CD4-positive, alpha-beta memory T cell (primary cell): ENCODE measurements at regions of chr12 and their contacts with region 1.

Region 1: DNA sequence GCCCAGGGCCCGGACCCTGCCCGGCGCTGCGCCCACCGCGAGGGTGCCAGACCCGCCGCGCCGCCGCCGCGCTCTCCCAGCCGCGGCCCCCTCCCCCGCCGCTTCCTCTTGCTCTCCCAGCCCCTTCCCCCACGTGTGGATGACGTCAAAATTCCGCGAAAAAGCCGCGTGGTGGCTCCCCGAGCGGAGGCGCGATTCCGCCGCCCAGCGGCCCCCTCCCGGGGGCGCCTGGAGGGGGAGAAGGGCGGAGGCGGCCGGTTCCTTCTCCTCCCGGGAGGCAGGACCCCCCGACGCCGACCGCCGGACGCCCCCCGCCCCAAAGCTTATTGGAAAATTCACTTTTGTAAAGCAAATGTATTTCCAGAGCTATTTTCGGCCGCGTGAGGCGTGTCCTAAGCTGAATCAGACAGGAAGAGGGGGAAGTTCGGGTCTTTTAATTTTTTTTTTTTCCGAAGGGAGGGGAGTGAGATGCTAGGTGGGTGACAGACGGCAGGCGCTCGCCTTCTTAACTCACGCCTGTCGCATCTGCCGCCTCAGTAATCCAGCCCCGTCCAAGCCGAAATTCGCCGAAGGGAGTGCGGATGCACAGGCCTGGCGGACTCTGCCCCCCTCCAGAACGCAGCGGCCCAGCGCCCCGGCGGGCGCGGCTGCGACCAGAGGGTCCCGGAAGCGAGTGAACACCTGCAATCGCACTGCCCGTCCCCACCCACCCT is 4.1 kb upstream of the CCND2 start:
- DNase-seq: peak; percentile 91 to 96 (median 93)
- H3K4me3 ChIP-seq: peak overlapping the region; percentile 79 to 84
- H3K4me3 Mint-ChIP-seq: peak overlapping the region; percentile 96 to 100 (median 98)
- H3K27ac ChIP-seq: peak overlapping the region; percentile 91
- H3K27ac Mint-ChIP-seq: peak overlapping the region; percentile 95 to 100 (median 98)
- H3K4me1 ChIP-seq: peaks cover 34% of the 10 kb centered on the region
- H3K4me1 Mint-ChIP-seq: peaks cover 13 to 49% (median 19%) of the 10 kb centered on the region in 4 donors
- H3K27me3 ChIP-seq: no peaks in the 10 kb centered on the region
- H3K27me3 Mint-ChIP-seq: peaks cover 1 to 6% of the 10 kb centered on the region in 2 donors

Region 2: GRCh38 chr12:3973978-3974644 is 295.3 kb before region 1 on chr12:
- CTCF ChIA-PET with region 1: no interaction called
- POLR2A ChIA-PET with region 1: interaction called, 11 read pairs
- intact Hi-C with region 1: no loop called
- DNase-seq: peak in 3 of 5 donors; percentile 20 to 46 (median 21)
- H3K4me3 ChIP-seq: peak overlapping the region in 1 of 2 donors; percentile 8
- H3K4me3 Mint-ChIP-seq: peak overlapping the region; percentile 5 to 83 (median 74)
- H3K27ac ChIP-seq: peak overlapping the region; percentile 43
- H3K27ac Mint-ChIP-seq: peak overlapping the region; percentile 75 to 93 (median 90)
- H3K4me1 ChIP-seq: peaks cover 57% of the 10 kb centered on the region
- H3K4me1 Mint-ChIP-seq: peaks cover 39 to 64% (median 51%) of the 10 kb centered on the region in 4 donors
- H3K27me3 ChIP-seq: no peaks in the 10 kb centered on the region
- H3K27me3 Mint-ChIP-seq: no peaks in the 10 kb centered on the region

Region 3: GRCh38 chr12:4118017-4118510 is 151.4 kb before region 1 on chr12:
- CTCF ChIA-PET with region 1: interaction called, 9 read pairs
- POLR2A ChIA-PET with region 1: interaction called, 17 read pairs
- intact Hi-C with region 1: no loop called
- DNase-seq: peak in 4 of 5 donors; percentile 34 to 45 (median 40)
- H3K4me3 ChIP-seq: no peak overlapping the region
- H3K4me3 Mint-ChIP-seq: peak overlapping the region; percentile 67 to 86 (median 80)
- H3K27ac ChIP-seq: no peak overlapping the region
- H3K27ac Mint-ChIP-seq: peak overlapping the region; percentile 31 to 92 (median 78)
- H3K4me1 ChIP-seq: peaks cover 50% of the 10 kb centered on the region
- H3K4me1 Mint-ChIP-seq: peaks cover 40 to 57% (median 45%) of the 10 kb centered on the region in 4 donors
- H3K27me3 ChIP-seq: no peaks in the 10 kb centered on the region
- H3K27me3 Mint-ChIP-seq: peaks cover 0 to 6% of the 10 kb centered on the region in 2 donors

Region 4: GRCh38 chr12:4164559-4165558 is 104.6 kb before region 1 on chr12:
- CTCF ChIA-PET with region 1: interaction called, 3 read pairs
- POLR2A ChIA-PET with region 1: interaction called, 24 read pairs
- intact Hi-C with region 1: no loop called
- DNase-seq: peak; percentile 40 to 60 (median 59)
- H3K4me3 ChIP-seq: peak overlapping the region; percentile 9 to 75
- H3K4me3 Mint-ChIP-seq: peak overlapping the region; percentile 83 to 94 (median 90)
- H3K27ac ChIP-seq: peak overlapping the region; percentile 50
- H3K27ac Mint-ChIP-seq: peak overlapping the region; percentile 28 to 96 (median 91)
- H3K4me1 ChIP-seq: peaks cover 12% of the 10 kb centered on the region
- H3K4me1 Mint-ChIP-seq: peaks cover 13 to 29% (median 22%) of the 10 kb centered on the region in 4 donors
- H3K27me3 ChIP-seq: no peaks in the 10 kb centered on the region
- H3K27me3 Mint-ChIP-seq: no peaks in the 10 kb centered on the region

Region 5: DNA sequence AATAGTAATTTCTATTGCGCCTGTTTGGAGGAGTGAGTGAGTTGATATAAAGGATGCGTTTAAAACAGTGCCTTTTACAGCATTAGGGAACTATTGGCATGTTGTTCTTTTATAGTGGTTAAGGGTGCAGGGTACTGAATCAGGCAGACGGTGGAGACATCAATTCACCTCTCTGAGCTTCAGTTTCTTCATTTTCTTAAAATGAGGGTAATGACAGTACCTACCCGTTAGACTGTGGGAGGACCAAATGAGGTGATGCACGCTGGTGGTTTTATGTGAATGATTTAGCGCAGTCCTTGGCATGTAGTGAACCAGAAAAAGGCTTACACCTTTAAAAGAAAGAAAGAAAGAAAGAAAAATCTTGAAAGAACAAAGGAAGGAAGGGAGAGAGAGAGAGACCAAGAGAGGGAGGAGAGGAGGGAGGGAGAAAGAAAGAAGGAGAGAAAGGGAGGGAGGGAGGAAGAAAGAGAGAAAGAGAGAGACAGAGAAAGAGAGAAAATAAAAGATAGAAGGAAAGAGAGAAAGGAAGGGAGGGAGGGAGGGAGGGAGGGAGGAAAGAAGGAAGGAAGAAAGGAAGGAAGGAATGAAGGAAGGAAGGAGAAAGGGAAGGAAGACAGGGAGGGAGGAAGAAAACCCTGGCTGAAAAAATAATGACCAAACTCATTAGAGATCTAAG is 18.1 kb before region 1 on chr12:
- CTCF ChIA-PET with region 1: interaction called, 7 read pairs
- POLR2A ChIA-PET with region 1: interaction called, 11 read pairs
- intact Hi-C with region 1: no loop called
- DNase-seq: peak; percentile 26 to 64 (median 45)
- H3K4me3 ChIP-seq: no peak overlapping the region
- H3K4me3 Mint-ChIP-seq: peak overlapping the region in 2 of 8 donors; percentile 14 to 50
- H3K27ac ChIP-seq: no peak overlapping the region
- H3K27ac Mint-ChIP-seq: peak overlapping the region in 5 of 7 donors; percentile 0 to 86 (median 57)
- H3K4me1 ChIP-seq: no peaks in the 10 kb centered on the region
- H3K4me1 Mint-ChIP-seq: peaks cover 4 to 9% (median 6%) of the 10 kb centered on the region in 4 donors
- H3K27me3 ChIP-seq: no peaks in the 10 kb centered on the region
- H3K27me3 Mint-ChIP-seq: peaks cover 4 to 7% of the 10 kb centered on the region in 2 donors

Region 6: DNA sequence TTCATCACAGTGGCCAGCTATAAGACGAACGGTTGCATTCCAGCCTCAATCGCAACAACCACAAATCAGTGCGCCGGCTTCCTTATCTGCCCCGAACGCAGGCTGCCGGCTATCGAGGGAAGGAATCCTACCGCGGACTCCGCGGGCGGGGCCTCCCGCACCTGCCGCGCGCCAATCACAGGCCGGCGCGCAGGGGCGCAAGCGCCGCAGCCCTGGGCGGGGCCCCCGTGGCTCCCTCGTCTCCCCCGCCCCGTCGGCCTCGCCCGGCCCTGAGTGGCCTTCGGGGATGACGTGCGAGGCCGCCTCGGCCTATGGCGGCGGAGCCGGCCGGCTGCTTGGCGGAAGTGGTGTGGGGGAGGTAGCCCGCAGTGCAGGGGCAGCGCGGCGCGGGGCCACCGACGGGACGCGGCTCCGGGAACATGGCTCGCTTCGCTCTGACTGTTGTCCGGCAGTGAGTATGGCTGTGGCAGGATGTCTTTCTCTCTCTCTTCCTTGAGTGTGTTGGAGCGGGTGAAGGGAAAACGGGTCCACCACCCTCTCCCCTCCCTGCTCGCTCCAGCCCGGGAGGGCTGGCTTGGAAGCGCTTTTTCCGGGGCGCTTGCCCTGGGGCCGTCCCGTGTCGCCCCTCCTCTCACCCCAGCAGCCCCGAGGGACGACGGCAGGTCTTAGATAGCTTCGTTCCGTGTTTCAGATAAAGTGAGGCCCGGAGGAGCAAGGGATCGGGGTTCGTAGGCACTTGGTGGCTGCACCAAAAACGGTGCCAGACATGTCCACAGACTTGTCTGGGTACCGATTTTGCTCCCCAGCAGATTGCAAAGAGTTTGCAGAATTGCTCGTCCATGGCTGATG is 51.6 kb after region 1 on chr12 and contains the start of gene TIGAR:
- CTCF ChIA-PET with region 1: interaction called, 5 read pairs
- POLR2A ChIA-PET with region 1: interaction called, 11 read pairs
- intact Hi-C with region 1: loop called (anchors 1 kb)
- DNase-seq: peak; percentile 88 to 94 (median 92)
- H3K4me3 ChIP-seq: peak within 1 kb of the TSS; percentile 97
- H3K4me3 Mint-ChIP-seq: peak within 1 kb of the TSS; percentile 83 to 95 (median 93)
- H3K27ac ChIP-seq: peak within 1 kb of the TSS; percentile 81
- H3K27ac Mint-ChIP-seq: peak within 1 kb of the TSS; percentile 93 to 97 (median 96)
- H3K4me1 ChIP-seq: peaks cover 30% of the 10 kb centered on the region
- H3K4me1 Mint-ChIP-seq: peaks cover 24 to 57% (median 37%) of the 10 kb centered on the region in 4 donors
- H3K27me3 ChIP-seq: no peaks in the 10 kb centered on the region
- H3K27me3 Mint-ChIP-seq: no peaks in the 10 kb centered on the region
- total RNA-seq, gene TIGAR: 15.2 to 17.3 TPM